ENCODE measurements at regions of chr1 and their contacts with region 1.

Region 1: DNA sequence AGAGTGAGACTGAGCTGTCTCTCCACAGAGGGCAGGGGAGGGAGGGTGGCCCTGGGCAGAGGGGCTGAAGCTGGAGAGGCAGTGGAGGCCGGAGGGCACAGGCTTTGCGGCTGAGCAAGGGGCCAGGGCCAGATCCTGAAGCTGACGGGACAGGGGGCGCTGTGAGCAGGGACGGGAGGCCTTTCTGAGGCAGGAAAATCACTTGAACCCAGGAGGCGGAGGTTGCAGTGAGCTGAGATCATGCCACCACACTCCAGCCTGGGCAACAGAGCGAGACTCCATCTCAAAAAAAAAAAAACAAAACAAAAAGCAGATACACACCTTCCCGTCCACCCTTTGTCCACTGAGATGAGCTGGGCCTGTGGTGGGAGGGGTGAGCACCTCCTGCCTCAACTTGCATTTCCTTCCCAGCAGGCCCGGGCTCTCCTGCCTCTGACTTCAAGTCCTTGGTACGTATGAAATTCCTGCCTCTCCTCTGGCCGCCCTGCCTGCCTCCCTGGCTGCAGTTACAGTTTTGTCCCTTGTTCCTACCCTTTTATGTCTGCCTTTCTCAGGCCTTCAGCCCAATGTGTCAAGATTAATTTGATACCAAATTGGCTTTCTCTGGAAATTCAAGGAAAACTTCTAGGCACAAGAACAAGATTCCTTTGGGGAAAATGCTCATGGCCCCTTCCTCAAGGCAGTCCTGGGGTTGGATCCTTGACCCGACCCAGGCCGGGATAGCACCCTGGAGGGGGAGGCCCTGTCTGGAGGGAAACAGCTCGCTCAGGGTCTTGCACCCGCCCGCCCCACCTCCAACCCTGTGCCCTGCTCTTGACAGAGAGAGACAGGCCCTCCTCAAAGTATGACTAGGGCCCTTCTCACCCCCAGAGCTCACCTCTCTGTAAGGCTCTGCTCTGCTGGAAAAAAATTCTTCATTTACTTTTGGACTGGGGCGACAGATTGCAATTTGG is 11.2 kb upstream of the ADAMTSL4 start:
- DNase-seq: no peak
- ATAC-seq: no peak
- H3K4me3 ChIP-seq: no peak overlapping the region
- H3K27ac ChIP-seq: no peak overlapping the region
- H3K4me1 ChIP-seq: peaks cover 9 to 15% of the 10 kb centered on the region in 2 donors
- H3K27me3 ChIP-seq: no peaks in the 10 kb centered on the region
- CTCF ChIP-seq: no peak
- POLR2A ChIP-seq: no peak

Region 2: GRCh38 chr1:150477733-150478132 is 60.3 kb before region 1 on chr1:
- in situ Hi-C with region 1: no loop called
- intact Hi-C with region 1: loop called (anchors 1 kb)
- DNase-seq: no peak
- ATAC-seq: no peak
- H3K4me3 ChIP-seq: no peak overlapping the region
- H3K27ac ChIP-seq: peak overlapping the region; percentile 82 to 86 (median 84)
- H3K4me1 ChIP-seq: peaks cover 59 to 66% of the 10 kb centered on the region in 2 donors
- H3K27me3 ChIP-seq: no peaks in the 10 kb centered on the region
- CTCF ChIP-seq: no peak
- POLR2A ChIP-seq: no peak

Region 3: GRCh38 chr1:151036363-151036762 is 498.4 kb after region 1 on chr1 and contains the start of gene BNIPL:
- in situ Hi-C with region 1: no loop called
- intact Hi-C with region 1: no loop called
- DNase-seq: no peak
- ATAC-seq: no peak
- H3K4me3 ChIP-seq: no peak within 1 kb of the TSS
- H3K27ac ChIP-seq: no peak within 1 kb of the TSS
- H3K4me1 ChIP-seq: no peaks in the 10 kb centered on the region
- H3K27me3 ChIP-seq: no peaks in the 10 kb centered on the region
- CTCF ChIP-seq: no peak
- POLR2A ChIP-seq: no peak
- total RNA-seq, gene BNIPL: 0.13 to 0.25 TPM in 2 of 4 donors, not detected in the others